Ascending aorta (tissue), 2 donors: ENCODE measurements at regions of chr10 and their contacts with region 1.

Region 1: DNA sequence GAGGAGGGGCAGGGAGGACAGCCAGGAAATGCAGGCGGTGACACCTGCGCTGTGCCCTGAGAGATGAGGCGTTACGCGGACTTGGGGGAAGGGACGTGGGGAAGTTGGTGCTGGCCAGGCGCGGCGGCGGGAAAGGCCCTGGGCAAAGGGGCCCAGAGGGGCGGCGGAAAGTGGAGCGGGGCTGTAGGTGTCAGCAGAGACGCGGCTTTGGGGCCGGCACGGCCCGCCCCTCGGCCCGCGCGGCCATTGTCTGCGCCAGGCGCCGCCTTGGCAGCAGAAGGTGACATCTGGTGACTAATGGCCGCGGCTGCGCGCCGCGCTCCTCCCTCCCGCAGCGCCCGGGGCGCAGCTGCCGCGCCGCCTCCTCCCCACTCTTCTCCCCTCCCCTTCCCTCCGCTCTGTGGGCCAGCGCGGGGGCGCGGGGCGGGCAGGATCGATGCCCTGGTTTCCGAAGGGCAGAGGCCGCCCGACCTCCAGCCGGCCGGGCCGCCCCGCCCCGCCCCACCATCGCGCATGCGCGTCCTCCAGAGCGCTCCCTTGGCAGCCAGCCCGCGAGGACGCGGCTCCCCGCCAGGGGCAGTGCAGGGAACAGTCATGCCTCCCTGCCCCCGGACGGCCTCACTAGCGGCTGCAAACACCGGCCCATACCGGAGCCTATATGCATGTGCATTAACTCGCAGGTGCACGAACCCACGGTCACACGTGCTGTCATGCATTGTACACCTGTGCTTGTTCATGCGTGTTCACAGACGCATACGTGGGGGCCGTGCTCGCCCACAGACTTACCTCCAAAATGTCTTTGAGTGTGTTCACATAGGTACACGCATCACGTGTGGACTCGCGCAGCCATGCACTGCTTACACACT is 269.6 kb downstream of the RPS24 start:
- DNase-seq: peak; percentile 75 to 96
- H3K4me3 ChIP-seq: peak overlapping the region; percentile 66 to 75
- H3K27ac ChIP-seq: peak overlapping the region; percentile 78 to 82
- H3K4me1 ChIP-seq: peaks cover 0 to 11% of the 10 kb centered on the region in 2 donors
- H3K27me3 ChIP-seq: no peaks in the 10 kb centered on the region
- CTCF ChIP-seq: peak; percentile 55 to 80 (median 56)

Region 2: DNA sequence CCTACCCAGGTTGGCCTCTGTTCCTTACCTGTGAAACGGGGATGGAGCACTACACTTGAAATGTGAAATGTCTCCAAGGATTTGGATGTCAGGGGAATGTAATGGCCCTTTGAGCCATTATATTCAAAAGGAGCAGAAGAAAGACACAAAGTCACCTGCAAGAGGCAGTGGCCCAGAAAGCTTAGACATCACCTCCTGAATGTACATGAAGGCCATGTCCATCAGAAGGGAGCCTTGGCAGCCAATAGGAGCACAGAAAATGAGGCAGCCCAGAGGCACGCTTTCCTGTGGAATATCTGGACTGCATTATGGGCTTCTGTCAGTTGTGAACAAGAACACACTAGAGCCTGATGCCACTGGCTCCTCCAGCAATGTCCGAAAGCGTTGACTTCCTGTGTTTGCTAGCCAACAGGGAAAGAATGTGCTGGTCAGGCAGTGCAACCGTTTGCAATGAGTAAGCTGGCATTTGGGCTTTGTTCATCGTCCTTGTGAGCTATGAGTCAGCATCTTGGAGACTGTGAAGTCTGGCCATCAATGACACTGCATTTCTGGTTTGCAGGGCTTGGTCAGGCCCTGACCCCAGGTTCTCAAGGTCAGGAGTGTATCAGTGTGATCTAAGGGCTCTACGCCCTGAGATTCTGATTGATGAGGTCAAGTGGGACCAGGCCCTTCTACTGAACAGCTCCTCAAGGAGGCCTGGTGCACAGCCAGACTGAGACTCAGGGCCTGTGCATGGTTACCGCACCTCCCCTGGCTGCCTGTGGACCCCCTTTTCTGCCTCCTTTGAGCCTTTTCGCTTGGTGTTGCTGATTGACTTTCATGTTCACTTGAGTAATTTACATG is 47.2 kb before region 1 on chr10:
- intact Hi-C with region 1: loop called (anchors 1 kb)
- DNase-seq: peak; percentile 64 to 93
- H3K4me3 ChIP-seq: no peak overlapping the region
- H3K27ac ChIP-seq: peak overlapping the region; percentile 69 to 79
- H3K4me1 ChIP-seq: peaks cover 0 to 10% of the 10 kb centered on the region in 2 donors
- H3K27me3 ChIP-seq: no peaks in the 10 kb centered on the region
- CTCF ChIP-seq: no peak

Region 3: DNA sequence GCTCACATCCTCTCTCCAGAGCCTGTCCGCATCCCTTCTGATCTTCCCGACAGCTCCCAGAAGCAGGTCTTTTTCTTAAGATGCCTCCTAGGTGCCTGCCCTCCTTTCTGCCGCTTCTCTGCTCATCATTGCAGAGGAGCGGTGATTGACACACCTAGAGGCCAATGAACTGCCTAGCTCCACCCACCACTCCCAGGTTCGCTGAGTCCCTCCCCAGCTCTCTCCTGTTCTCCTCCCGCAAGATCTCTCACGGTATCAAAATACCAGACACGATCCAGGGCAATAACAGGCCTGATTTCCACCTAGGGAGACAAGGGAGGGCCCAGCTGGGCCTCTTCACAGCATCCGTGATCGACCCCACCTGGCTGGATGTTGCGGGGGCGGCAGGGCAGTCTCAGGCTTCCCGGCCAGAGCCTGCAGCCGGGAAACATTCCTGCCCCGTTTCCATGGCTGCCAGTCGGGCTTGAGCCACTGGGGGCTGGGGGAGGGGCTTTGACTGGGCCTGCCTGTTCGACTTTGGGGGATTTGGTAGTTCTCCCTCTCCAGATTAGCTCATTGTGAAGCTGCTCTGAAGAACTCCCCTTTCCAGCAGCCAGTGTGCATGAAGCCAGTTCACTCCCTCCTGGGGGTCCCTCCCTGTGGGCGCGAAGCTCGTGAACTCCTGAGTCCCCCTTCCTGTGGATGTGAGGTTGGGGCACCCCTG is 103.9 kb after region 1 on chr10:
- intact Hi-C with region 1: loop called (anchors 2 kb)
- DNase-seq: peak; percentile 41 to 83
- H3K4me3 ChIP-seq: peak overlapping the region; percentile 41 to 49
- H3K27ac ChIP-seq: peak overlapping the region in 1 of 2 donors; percentile 0
- H3K4me1 ChIP-seq: peaks cover 4 to 26% of the 10 kb centered on the region in 2 donors
- H3K27me3 ChIP-seq: no peaks in the 10 kb centered on the region
- CTCF ChIP-seq: no peak

Region 4: GRCh38 chr10:78657163-78657861 is 354.1 kb after region 1 on chr10:
- intact Hi-C with region 1: loop called (anchors 5 kb)
- DNase-seq: peak in 1 of 2 donors; percentile 83
- H3K4me3 ChIP-seq: no peak overlapping the region
- H3K27ac ChIP-seq: no peak overlapping the region
- H3K4me1 ChIP-seq: no peaks in the 10 kb centered on the region
- H3K27me3 ChIP-seq: no peaks in the 10 kb centered on the region
- CTCF ChIP-seq: peak; percentile 50 to 66 (median 53)

Region 5: DNA sequence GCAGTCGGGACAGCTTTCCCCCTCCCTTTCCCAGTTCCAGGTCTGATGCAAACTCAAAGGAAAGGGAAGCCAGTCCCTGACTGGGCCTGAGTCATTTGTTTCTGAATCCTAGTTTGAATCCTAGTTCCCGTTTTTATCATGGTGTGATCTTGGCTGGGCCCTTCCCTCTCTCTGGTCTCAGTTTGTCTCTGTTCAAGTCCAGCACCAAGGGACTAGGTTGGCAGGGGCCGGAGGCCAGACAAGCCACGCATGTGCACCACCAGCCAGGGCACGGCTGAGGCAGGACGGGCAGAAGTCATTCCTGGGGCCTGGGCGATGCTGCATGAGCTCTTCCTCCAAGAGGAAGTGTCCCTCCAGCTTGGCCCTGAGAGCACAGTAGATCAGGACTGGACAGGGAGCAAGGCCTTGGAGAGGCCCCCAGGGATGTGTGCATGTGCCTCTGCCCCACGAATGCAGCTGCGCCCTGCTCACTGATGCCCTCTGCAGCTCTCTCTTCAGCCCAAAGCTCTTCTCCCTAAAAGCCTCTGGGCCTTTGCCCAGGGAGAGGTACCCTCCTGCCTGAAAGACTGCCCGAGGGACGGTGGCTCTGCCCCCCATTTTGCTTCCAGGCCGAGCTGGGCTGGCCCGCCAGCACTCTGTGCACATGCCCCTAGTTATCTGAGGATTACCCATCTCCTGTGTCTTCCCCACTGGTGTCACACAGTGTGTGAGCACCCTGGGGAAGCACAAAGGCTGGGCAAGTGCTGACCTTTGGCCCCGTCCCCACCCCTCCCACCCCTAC is 852.3 kb after region 1 on chr10:
- intact Hi-C with region 1: loop called (anchors 5 kb)
- DNase-seq: peak in 1 of 2 donors; percentile 84
- H3K4me3 ChIP-seq: no peak overlapping the region
- H3K27ac ChIP-seq: peak overlapping the region; percentile 87 to 88
- H3K4me1 ChIP-seq: peaks cover 56 to 100% of the 10 kb centered on the region in 2 donors
- H3K27me3 ChIP-seq: no peaks in the 10 kb centered on the region
- CTCF ChIP-seq: peak in 1 of 3 experiments; percentile 24